ENCODE measurements at regions of chr1 and their contacts with region 1.

Region 1: DNA sequence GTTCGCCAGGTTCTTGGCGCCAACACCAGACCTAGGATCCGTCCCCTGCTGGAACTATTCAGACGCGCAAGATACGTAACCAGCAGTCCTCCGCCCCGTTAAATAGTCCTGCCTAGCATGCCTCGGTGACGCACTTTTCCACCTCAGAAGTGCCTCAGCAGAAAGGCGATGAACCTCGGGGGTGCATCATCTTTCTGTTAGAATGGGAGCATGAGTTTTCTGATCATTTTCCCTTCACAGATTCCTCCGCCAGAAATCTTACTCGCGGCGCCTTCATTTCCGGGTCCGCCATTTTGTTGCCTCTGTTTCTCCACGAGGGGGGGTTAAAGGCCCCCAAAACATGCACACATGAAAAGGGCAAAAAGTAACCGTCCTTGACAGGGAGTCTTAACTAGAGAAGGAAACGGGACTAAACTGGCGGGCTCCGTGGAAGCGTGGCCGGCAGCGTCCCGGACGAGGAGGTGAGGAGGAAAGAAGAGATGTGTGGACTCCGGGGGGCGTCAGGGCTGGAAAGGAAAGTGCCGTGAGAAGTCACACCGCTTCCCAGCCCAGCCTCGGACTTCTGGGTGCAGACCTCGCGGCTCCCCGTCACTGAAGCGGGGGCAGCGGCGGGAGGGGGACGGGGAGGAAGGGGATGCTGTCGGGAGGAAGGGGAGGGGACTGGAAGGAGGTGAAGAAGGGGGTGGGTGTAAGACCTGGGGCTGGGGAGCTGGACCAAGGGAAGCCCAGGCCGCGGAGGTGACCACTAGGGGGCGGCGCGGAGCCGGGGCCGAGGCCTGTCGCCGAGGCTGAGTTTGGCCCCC is at the start of gene GABPB2:
- DNase-seq: peak; percentile 97
- H3K4me3 ChIP-seq: peak within 1 kb of the TSS; percentile 62 to 83 (median 76)
- H3K27ac ChIP-seq: peak within 1 kb of the TSS; percentile 95 to 99 (median 97)
- H3K4me1 ChIP-seq: peaks cover 0 to 19% (median 15%) of the 10 kb centered on the region in 4 donors
- H3K27me3 ChIP-seq: no peaks in the 10 kb centered on the region
- CTCF ChIP-seq: peak; percentile 73 to 95 (median 84)
- EP300 ChIP-seq: peak in 2 of 4 donors; percentile 63 to 65
- POLR2A ChIP-seq: peak; percentile 46 to 75
- total RNA-seq, gene GABPB2: 20.6 to 27.0 (median 25.3) TPM

Region 2: GRCh38 chr1:151059078-151059907 is 11.4 kb before region 1 on chr1 and contains the start of gene CDC42SE1:
- intact Hi-C with region 1: loop called (anchors 1 kb)
- DNase-seq: peak; percentile 92
- H3K4me3 ChIP-seq: peak within 1 kb of the TSS; percentile 75 to 98 (median 84)
- H3K27ac ChIP-seq: peak within 1 kb of the TSS; percentile 90 to 97 (median 92)
- H3K4me1 ChIP-seq: peaks cover 0 to 51% (median 40%) of the 10 kb centered on the region in 4 donors
- H3K27me3 ChIP-seq: no peaks in the 10 kb centered on the region
- CTCF ChIP-seq: peak; percentile 90 to 96 (median 92)
- EP300 ChIP-seq: no peak
- POLR2A ChIP-seq: peak; percentile 96
- total RNA-seq, gene CDC42SE1: 37.8 to 53.6 (median 47.1) TPM

Region 3: DNA sequence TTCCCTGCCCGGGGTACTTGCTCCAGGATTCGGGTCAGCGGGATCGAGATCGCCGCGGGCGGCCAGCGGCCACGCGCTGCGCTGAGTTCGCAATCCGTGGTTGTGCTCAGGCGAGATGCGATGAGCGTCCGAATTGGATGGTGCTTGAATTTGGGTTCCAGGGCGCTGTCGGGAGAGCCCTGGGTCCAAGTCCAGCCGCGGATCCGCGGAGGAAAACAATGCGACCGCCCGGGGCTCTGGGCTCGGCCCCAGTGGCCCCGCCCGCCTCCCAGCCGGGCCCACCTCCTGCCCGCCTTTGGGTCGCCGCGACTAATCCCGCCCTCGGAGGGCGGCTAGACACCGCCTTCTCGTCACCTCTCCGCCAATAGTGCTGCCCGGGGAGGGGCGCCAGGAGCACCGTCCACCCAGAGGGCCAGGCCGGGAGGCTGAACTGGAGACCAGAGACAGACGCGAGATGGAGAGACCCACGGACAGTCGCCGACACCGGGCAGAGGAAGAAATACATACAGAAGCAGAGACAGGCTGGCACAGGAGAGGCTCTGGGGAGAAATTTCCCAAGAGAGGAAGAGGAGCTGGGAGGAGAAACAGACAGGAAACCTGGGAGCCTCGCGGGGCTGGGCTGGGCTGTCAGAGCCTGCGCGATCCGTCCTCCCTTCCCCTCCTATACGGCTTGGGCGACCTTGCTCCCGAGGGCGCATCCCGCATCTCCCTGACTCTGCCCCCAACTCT is 75.9 kb after region 1 on chr1 and contains the start of gene SEMA6C:
- intact Hi-C with region 1: loop called (anchors 2 kb)
- DNase-seq: peak; percentile 98
- H3K4me3 ChIP-seq: peak within 1 kb of the TSS; percentile 75 to 84 (median 82)
- H3K27ac ChIP-seq: peak within 1 kb of the TSS; percentile 84 to 87 (median 86)
- H3K4me1 ChIP-seq: peaks cover 0 to 42% (median 28%) of the 10 kb centered on the region in 4 donors
- H3K27me3 ChIP-seq: no peaks in the 10 kb centered on the region
- CTCF ChIP-seq: no peak
- EP300 ChIP-seq: no peak
- POLR2A ChIP-seq: peak; percentile 70 to 74
- total RNA-seq, gene SEMA6C: 5.0 to 20.6 (median 7.8) TPM